Activated CD4-positive, alpha-beta memory T cell treated with anti-CD3 and anti-CD28 coated beads for 36 hours (primary cell): ENCODE measurements at regions of chr1 and their contacts with region 1.

Region 1: GRCh38 chr1:226736908-226737818 is 1.9 kb downstream of the ITPKB start:
- DNase-seq: peak; percentile 71
- H3K4me3 Mint-ChIP-seq: peak overlapping the region; percentile 89
- H3K27ac Mint-ChIP-seq: peak overlapping the region; percentile 94
- H3K4me1 Mint-ChIP-seq: peaks cover 45% of the 10 kb centered on the region
- H3K27me3 Mint-ChIP-seq: no peaks in the 10 kb centered on the region

Region 2: DNA sequence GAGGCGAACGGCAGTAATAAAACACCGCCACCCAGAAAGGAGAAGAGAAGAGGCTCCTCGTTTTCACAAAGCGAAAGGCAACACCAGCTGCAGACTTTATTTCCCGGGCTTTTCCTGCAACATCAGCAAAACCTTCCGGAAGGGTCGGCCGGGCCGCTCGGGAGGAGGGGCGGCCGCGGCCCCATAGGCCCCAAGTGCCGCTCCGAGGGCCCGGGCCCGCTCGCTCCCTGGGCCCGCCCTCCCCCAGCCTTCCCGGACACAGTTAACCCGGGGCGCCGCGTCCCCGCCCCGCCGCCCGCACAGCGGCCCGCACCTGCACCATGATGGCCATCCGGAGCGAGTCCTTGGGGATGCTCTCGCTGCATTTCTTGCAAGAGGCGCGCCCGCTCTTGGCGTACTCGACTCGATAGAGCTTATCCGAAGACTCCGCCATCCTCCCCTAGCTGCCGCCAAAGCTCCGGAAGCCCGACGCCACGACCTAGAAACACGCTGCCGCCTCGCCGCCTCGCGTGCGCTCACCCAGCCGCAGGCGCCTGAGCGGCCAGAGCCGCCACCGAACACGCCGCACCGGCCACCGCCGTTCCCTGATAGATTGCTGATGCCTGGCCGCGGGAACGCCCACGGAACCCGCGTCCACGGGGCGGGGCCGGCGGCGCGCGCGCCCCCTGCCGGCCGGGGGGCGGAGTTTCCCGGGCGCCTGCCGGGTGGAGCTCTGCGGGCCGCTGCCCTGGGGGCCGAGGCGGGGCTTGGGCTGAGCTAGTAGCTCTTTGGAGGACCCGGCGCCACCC is 329.5 kb before region 1 on chr1 and contains the start of gene PARP1:
- CTCF ChIA-PET with region 1: interaction called, 3 read pairs
- POLR2A ChIA-PET with region 1: no interaction called
- intact Hi-C with region 1: loop called (anchors 5 kb)
- DNase-seq: peak; percentile 93
- H3K4me3 Mint-ChIP-seq: peak within 1 kb of the TSS; percentile 100
- H3K27ac Mint-ChIP-seq: peak within 1 kb of the TSS; percentile 98
- H3K4me1 Mint-ChIP-seq: peaks cover 37% of the 10 kb centered on the region
- H3K27me3 Mint-ChIP-seq: no peaks in the 10 kb centered on the region
- total RNA-seq, gene PARP1: 301 to 308 TPM

Region 3: GRCh38 chr1:226634166-226634588 is 103.0 kb before region 1 on chr1:
- CTCF ChIA-PET with region 1: interaction called, 16 read pairs
- POLR2A ChIA-PET with region 1: interaction called, 3 read pairs
- intact Hi-C with region 1: loop called (anchors 2 kb)
- DNase-seq: peak; percentile 86
- H3K4me3 Mint-ChIP-seq: no peak overlapping the region
- H3K27ac Mint-ChIP-seq: peak overlapping the region; percentile 11
- H3K4me1 Mint-ChIP-seq: peaks cover 57% of the 10 kb centered on the region
- H3K27me3 Mint-ChIP-seq: no peaks in the 10 kb centered on the region

Region 4: DNA sequence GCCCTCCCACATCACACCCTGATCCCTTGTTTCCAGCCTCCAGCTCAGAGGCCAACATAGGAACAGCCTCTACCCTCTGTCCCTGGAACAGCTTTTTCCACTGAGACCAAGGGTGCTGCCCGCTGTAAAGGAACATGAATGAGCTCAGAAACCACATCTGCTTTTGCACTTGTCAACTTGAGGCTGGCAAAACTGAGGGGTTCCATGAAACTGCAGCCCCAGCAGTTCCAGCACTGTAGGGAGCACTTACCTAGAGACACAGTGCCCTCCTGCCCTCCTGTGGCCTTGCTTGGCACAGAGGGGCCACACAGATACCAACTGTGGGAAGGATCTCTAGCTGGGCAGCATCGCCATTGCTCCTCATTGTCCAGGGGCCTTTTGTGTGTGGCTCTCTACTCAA is 49.7 kb before region 1 on chr1:
- CTCF ChIA-PET with region 1: interaction called, 13 read pairs
- POLR2A ChIA-PET with region 1: interaction called, 3 read pairs
- intact Hi-C with region 1: loop called (anchors 1 kb)
- DNase-seq: peak; percentile 78
- H3K4me3 Mint-ChIP-seq: no peak overlapping the region
- H3K27ac Mint-ChIP-seq: peak overlapping the region; percentile 85
- H3K4me1 Mint-ChIP-seq: peaks cover 99% of the 10 kb centered on the region
- H3K27me3 Mint-ChIP-seq: no peaks in the 10 kb centered on the region

Region 5: DNA sequence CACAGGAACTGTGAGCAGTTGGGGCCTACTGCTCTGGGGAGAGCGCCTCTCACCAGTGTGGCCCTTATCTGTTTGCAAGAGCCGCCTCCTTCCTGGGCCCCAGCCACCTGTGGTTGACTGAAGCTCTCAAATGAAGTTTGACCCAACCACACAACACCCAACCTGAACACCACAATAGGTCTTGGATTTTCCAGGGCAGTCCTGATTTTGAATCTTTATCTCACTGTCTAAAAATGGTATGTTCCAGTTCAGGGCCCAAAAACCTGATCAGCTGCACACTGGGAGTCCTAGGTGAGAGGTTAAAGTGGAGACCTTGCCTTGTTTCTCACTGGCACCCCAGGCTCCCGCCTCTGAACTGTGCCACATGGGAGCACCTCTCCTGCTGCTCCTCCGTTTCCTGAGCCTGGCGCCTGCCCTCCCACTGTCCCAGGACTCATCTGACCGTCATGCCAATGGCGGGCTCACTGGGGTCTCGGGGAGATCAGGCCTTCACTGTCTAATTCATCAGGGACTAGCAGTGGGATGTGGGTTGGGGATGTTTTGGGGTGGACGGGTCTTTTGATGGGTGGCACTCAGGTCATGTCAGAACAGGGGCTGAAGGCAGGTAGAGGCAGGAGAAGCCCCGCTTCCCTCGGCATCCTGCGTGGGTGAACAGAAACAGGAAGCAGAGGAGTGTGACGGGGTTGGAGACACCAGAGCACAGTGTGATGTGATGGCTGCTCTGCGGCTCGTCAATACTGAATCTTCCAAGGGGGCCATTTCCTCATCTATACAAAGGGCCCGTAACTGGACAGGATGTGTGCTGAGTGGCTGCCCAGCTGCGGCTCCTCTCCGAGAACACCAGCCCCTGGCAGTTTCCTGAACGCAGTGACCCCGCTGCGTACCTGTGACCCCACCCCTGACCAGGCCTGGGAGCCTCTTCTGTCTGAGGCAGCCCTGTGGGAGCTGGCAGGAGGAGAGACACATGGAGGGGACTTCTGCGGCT is 61.6 kb after region 1 on chr1:
- CTCF ChIA-PET with region 1: no interaction called
- POLR2A ChIA-PET with region 1: no interaction called
- intact Hi-C with region 1: loop called (anchors 1 kb)
- DNase-seq: peak; percentile 84
- H3K4me3 Mint-ChIP-seq: peak overlapping the region; percentile 49
- H3K27ac Mint-ChIP-seq: peak overlapping the region; percentile 95
- H3K4me1 Mint-ChIP-seq: peaks cover 33% of the 10 kb centered on the region
- H3K27me3 Mint-ChIP-seq: no peaks in the 10 kb centered on the region

Region 6: DNA sequence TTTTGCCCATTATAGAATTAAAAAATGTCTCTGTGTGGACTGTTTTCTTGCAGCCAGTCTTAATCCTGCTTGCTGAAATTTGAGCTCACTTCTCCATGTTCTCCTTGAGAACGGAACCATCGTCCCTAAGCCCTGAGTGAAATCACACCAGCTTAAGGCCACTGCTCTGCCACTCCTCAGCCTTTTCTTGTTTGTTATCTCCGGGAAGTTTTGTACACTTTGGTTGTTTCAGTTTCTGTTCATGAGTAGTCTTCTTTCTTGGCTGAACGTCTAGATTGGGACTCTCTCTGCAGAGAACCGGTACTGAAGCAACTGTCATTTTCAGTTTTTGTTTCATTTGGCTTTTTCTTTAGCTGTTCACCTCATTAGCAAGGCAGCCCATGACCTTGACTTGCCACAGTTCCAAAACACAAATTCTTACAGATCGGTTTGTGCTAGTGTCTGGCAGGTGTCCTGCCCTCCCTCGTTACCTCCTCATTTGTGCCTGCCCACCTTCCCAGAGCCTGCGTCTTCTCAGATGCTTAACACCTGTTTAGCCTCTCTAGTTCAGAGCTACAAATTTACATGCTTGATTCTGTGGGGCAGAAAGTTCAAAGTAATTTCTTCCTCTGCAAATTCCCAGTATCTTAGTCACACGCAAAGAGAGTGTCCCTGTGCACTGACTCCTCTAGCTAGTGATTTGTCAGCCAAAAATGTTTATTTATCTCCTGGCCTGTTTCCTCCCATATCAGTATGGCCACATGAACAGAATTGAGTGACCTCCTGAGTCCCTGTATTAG is 145.7 kb after region 1 on chr1:
- CTCF ChIA-PET with region 1: no interaction called
- POLR2A ChIA-PET with region 1: no interaction called
- intact Hi-C with region 1: loop called (anchors 5 kb)
- DNase-seq: peak; percentile 49
- H3K4me3 Mint-ChIP-seq: peak overlapping the region; percentile 56
- H3K27ac Mint-ChIP-seq: peak overlapping the region; percentile 92
- H3K4me1 Mint-ChIP-seq: peaks cover 49% of the 10 kb centered on the region
- H3K27me3 Mint-ChIP-seq: no peaks in the 10 kb centered on the region

Region 7: DNA sequence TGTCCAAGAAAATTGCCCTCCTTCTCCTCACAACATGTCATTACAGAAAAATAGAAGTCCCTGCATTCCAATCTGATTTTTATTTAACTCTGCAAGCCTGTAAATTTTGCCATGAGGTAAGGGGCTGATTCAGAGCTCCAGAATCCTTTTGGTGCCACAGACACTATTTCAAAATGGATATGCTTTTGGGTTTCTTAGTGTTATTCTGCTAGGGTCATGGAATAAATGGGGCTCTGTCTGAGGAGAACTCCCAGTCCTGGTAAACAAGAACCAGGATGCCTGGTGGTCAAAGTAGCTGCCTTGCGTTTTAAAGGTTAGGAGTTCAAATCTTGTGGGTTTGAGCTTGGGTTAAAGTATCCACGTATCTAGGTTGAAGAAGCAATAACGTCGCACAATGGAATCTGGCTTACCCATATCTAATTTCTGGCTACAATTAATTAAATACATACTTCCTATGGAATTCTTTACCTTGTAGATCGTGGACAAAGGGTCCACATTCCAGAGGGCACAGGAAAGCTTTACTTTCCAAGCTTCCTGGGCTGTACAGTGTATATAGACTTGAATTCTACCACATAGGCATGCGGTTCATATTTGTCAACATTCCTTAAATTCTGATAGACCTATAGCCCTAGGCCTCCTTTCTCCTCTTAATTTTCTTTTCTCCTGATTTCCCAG is 679.1 kb after region 1 on chr1:
- CTCF ChIA-PET with region 1: no interaction called
- POLR2A ChIA-PET with region 1: no interaction called
- intact Hi-C with region 1: no loop called
- DNase-seq: no peak
- H3K4me3 Mint-ChIP-seq: no peak overlapping the region
- H3K27ac Mint-ChIP-seq: no peak overlapping the region
- H3K4me1 Mint-ChIP-seq: no peaks in the 10 kb centered on the region
- H3K27me3 Mint-ChIP-seq: peaks cover 4% of the 10 kb centered on the region

Region 8: GRCh38 chr1:228082135-228082891 is 1345.2 kb after region 1 on chr1 and contains the start of gene ARF1:
- CTCF ChIA-PET with region 1: no interaction called
- POLR2A ChIA-PET with region 1: no interaction called
- intact Hi-C with region 1: loop called (anchors 10 kb)
- DNase-seq: peak; percentile 93
- H3K4me3 Mint-ChIP-seq: peak within 1 kb of the TSS; percentile 91
- H3K27ac Mint-ChIP-seq: peak within 1 kb of the TSS; percentile 96
- H3K4me1 Mint-ChIP-seq: peaks cover 37% of the 10 kb centered on the region
- H3K27me3 Mint-ChIP-seq: no peaks in the 10 kb centered on the region
- total RNA-seq, gene ARF1: 346 to 355 TPM